ENCODE measurements at regions of chr4 and their contacts with region 1.

Region 1: DNA sequence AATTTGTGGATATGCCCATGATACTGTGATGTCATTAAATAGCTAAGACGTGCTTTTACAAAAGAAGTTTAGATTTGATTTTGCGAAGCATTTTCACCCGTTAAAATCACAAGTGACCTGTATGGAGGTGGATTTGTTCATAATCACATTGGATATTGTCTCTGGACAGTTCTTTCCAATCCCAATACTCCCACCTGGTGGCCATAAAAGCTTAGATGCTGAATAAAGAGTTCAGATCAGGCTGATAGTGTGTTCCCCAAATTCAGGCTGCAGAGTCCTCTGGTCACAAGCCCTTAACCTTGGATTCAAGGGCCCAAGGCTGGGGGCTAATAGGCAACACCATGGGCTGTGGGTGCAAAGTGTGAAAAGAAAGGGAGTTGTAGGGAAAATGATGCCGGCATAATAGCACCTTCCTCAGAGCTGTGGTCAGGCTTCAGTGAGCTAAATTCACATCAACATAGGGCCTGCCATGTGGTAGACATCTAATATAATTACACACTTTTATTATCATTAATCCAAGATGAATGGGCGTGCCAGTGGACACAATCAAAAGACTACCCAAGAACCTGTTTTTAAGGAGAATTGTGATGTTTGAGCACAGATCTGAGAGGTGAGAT is 28.1 kb downstream of the SMIM43 start:
- DNase-seq: peak; percentile 31 to 68 (median 48)
- ATAC-seq: peak; percentile 88
- H3K4me3 ChIP-seq: no peak overlapping the region
- H3K27ac ChIP-seq: no peak overlapping the region
- H3K4me1 ChIP-seq: no peaks in the 10 kb centered on the region
- H3K27me3 ChIP-seq: peaks cover 7 to 19% of the 10 kb centered on the region in 2 experiments
- CTCF ChIP-seq: peak; percentile 58 to 75 (median 75)
- EP300 ChIP-seq: no peak
- POLR2A ChIP-seq: no peak
- RAD21 ChIP-seq: peak; percentile 65 to 78

Region 2: DNA sequence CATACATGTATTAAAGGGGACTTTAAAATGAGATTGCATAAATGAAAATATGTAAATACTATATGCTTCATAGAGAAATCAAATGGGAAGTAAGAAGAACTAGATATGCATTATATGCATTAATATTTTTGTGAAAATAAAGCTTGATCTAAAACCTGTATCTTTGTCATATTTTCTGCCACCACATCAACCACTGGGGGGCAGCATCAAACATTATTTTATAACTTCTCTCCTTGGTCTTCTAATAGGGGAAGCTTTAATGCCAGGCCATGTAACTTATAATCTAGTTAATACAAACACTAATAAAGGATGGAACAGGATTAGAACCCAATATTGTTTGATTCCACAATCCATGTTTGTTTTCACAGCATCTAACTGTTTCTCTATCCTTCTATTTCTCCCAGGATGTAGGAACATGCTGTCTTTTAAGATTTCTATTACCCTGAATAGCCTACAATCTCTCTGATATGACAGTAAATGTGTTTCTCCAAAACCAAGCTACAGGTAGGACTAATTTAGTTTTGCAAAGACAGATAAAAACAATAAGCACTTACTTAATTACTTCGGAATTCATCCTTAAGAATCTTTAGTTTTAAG is 366.0 kb before region 1 on chr4:
- CTCF ChIA-PET with region 1: no interaction called
- POLR2A ChIA-PET with region 1: no interaction called
- in situ Hi-C with region 1: loop called (anchors 5 kb)
- intact Hi-C with region 1: loop called (anchors 2 kb)
- DNase-seq: peak; percentile 9 to 43 (median 16)
- ATAC-seq: peak; percentile 67
- H3K4me3 ChIP-seq: no peak overlapping the region
- H3K27ac ChIP-seq: no peak overlapping the region
- H3K4me1 ChIP-seq: no peaks in the 10 kb centered on the region
- H3K27me3 ChIP-seq: no peaks in the 10 kb centered on the region
- CTCF ChIP-seq: peak in 2 of 3 experiments; percentile 26 to 64; a peak in 3 of 6 replicates
- EP300 ChIP-seq: no peak
- POLR2A ChIP-seq: no peak
- RAD21 ChIP-seq: peak; percentile 43 to 53; a peak in 3 of 4 replicates

Region 3: DNA sequence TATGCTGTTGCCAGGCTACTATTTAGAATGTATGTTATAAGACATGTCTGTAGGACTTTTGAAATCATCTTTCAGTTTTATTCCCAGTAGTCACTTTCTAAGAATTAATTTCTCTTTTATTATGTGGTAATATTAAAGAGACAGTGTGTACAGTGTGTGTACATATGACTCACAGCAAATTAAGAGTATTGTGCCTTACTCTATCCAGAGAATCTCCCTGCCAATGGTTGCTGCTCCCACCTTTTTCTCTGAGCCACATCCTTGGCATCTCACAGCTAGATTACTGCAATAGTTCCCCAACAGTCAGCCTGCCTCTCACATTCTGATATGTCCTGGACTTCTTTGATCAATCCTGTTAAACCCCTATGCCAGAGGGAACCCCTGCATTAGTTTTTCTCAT is 154.5 kb before region 1 on chr4:
- CTCF ChIA-PET with region 1: no interaction called
- POLR2A ChIA-PET with region 1: no interaction called
- in situ Hi-C with region 1: no loop called
- intact Hi-C with region 1: no loop called
- DNase-seq: no peak
- ATAC-seq: no peak
- H3K4me3 ChIP-seq: no peak overlapping the region
- H3K27ac ChIP-seq: no peak overlapping the region
- H3K4me1 ChIP-seq: no peaks in the 10 kb centered on the region
- H3K27me3 ChIP-seq: no peaks in the 10 kb centered on the region; a peak in 1 of 5 replicates
- CTCF ChIP-seq: no peak
- EP300 ChIP-seq: no peak
- POLR2A ChIP-seq: no peak
- RAD21 ChIP-seq: no peak